Activated naive CD4-positive, alpha-beta T cell treated with anti-CD3 and anti-CD28 coated beads for 36 hours (primary cell): ENCODE measurements at regions of chr4 and their contacts with region 1.

Region 1: DNA sequence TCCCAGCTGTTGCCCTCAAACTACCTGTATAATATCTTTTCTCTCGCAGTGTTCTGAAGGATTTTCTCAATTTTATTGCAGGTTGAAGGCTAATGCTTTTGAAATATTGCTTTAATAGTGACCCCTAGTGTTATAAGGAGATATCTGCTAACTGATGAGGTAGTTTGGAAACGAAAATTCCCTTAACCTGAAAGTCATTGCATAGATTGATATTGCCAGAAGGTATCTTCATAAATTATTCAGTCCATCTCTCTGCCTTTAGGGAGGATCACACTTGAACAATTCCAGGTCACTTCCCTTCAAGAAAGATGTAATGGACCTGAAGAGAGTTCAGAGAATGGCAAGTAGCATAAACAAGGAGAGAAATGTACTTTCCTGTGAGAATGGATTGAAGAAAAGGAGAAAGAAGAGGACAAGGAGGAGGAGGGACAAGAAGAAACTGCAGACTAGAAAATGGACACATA is 44.1 kb downstream of the TIGD4 start:
- DNase-seq: no peak
- H3K4me3 Mint-ChIP-seq: no peak overlapping the region
- H3K27ac Mint-ChIP-seq: no peak overlapping the region
- H3K4me1 Mint-ChIP-seq: no peaks in the 10 kb centered on the region
- H3K27me3 Mint-ChIP-seq: peaks cover 3% of the 10 kb centered on the region

Region 2: DNA sequence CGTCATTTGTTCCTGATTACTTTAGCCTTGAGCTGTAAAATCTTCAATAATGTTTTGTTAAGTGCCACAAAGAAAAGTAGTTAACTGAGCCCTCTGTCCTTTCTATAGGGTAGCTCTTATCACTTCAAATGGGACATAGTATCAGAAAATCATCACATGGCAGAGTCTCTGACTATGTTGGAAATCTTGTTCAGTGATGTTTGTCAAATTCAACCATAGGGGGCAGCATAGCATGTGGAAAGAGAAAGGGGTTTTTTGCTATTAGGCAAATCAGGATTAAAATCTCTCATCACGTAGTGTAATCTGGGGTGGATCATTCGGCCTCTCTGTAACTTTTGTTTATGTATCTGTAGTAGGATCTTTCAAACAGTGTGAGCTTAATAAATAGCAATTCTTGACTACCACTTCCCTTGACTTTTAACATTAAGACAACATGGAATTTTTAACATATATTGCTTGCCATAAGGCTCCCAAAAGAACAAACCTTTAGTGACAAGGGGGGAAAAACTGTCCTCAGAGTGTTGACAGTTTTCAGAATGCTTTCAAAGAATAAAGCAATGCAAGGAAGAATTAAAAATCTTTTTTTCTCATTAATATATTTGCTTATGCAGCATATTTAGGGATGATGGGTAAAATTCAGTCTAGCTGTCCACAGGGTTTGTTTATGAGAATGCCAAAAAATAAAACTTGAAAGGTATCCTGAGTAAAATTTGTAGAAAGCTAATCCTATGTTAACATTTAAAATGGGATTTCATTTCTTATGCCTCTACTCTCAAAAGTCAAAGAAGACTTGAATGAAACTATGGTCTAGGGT is 326.7 kb before region 1 on chr4:
- CTCF ChIA-PET with region 1: interaction called, 14 read pairs
- intact Hi-C with region 1: loop called (anchors 1 kb)
- DNase-seq: peak; percentile 35
- H3K4me3 Mint-ChIP-seq: no peak overlapping the region
- H3K27ac Mint-ChIP-seq: no peak overlapping the region
- H3K4me1 Mint-ChIP-seq: peaks cover 7% of the 10 kb centered on the region
- H3K27me3 Mint-ChIP-seq: no peaks in the 10 kb centered on the region

Region 3: DNA sequence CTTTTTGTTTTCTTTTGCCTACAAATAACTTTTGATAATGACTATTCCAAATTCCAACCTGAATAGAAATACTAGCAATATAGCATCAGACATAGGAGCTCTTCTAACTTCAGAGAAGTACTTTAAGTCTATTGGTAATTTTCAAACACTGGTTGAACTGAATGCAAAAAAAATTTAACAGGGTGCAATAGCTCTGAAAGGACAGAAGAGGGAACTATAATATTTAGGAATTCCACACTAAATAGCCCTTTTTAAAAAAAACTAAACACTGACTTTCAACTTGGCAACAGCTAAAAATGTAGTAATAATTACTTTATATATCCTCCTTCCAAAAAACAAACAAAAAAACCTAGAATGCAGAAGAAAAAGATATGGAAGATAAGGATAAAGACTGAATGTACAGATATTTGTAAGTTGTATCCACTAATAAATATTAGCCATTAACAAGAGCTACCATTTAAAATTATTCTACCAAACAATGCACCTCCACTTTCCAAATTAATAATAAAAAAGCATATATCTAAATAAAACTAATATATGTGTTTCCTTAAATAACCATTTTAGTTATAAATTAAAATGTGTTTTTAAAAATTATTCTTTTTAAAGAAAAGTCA is 280.9 kb before region 1 on chr4:
- CTCF ChIA-PET with region 1: no interaction called
- intact Hi-C with region 1: loop called (anchors 1 kb)
- DNase-seq: no peak
- H3K4me3 Mint-ChIP-seq: no peak overlapping the region
- H3K27ac Mint-ChIP-seq: no peak overlapping the region
- H3K4me1 Mint-ChIP-seq: peaks cover 32% of the 10 kb centered on the region
- H3K27me3 Mint-ChIP-seq: no peaks in the 10 kb centered on the region

Region 4: DNA sequence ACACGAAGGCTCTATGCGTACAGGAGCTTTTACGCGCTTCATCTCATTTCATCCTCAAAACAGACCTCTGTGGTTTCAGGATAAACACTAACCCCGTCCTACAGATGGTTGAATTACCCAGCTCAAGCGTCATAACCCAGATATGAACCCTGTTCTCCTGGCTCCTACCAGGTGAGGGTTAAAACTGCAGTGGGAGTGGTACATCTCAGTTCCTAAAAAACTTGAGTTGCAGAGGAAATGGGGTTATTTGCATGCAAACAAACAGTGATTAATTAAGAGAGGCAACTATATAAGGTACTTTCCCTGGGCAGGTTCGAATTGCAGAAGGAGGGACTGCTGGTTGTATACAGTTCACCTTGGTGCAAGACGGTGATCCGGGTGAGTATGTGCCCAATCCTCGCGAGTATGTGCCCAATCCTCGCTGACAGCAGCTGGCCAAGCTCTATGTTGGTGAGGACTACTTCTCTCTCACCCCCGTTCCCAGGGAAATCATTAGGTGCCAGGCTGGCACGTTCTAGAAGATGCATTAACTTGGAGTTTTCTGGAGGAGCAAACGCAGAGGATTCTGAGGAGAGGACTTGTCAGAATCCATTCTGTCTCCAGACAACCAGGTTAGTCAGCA is 273.3 kb after region 1 on chr4:
- CTCF ChIA-PET with region 1: no interaction called
- intact Hi-C with region 1: no loop called
- DNase-seq: no peak
- H3K4me3 Mint-ChIP-seq: no peak overlapping the region
- H3K27ac Mint-ChIP-seq: no peak overlapping the region
- H3K4me1 Mint-ChIP-seq: no peaks in the 10 kb centered on the region
- H3K27me3 Mint-ChIP-seq: no peaks in the 10 kb centered on the region